A549 (cell line): ENCODE measurements at regions of chr16 and their contacts with region 1.

Region 1: DNA sequence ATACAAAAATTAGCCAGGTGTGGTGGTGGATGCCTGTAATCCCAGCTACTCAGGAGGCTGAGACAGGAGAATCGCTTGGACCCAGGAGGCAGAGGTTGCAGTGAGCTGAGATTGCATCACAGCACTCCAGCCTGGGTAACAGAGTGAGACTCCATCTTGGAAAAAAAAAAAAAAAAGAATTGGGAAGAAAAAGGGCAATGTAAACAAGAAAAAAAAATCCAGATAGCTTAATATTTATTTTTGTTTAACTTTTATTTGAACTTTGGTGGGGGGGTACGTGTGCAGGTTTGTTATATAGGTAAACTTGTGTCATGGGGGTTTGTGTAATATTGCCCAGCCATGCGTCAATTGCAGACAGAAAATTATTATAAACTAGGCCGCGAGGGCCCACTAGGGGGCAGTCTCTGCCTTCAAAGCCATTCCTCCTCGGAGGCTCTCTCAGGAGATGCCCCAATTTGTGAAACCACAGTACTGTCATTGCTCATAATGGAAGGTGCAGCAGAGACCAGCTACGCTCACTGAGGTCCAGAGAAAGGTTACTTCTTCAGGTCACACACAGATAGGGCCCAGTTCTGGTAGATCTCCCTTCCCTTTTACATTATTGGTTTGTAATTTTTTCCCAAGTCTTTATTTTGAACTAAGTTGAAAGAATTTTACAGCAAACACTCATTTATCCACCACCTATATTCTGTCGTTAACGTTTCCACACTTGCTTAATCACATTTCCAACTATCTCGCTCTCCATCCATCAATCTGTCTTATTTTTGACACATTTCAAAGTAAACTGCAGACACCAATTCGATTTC is 206.2 kb downstream of the PRKCB start:
- DNase-seq: peak; percentile 65 to 69
- ATAC-seq: peak; percentile 76 to 89; a peak in 5 of 6 replicates
- H3K4me3 ChIP-seq: no peak overlapping the region
- H3K27ac ChIP-seq: no peak overlapping the region
- H3K4me1 ChIP-seq: no peaks in the 10 kb centered on the region
- CTCF ChIP-seq: peak; percentile 79
- EP300 ChIP-seq: no peak
- POLR2A ChIP-seq: no peak
- RAD21 ChIP-seq: peak; percentile 78 to 89

Region 2: GRCh38 chr16:23823475-23824384 is 218.3 kb before region 1 on chr16:
- CTCF ChIA-PET with region 1: no interaction called
- POLR2A ChIA-PET with region 1: no interaction called
- DNase-seq: no peak
- ATAC-seq: peak in 1 of 2 experiments; percentile 47; a peak in 1 of 6 replicates
- H3K4me3 ChIP-seq: no peak overlapping the region
- H3K27ac ChIP-seq: no peak overlapping the region
- H3K4me1 ChIP-seq: no peaks in the 10 kb centered on the region
- CTCF ChIP-seq: no peak
- EP300 ChIP-seq: no peak
- POLR2A ChIP-seq: no peak
- RAD21 ChIP-seq: no peak

Region 3: GRCh38 chr16:23941963-23942564 is 100.0 kb before region 1 on chr16:
- CTCF ChIA-PET with region 1: no interaction called
- POLR2A ChIA-PET with region 1: no interaction called
- DNase-seq: no peak
- ATAC-seq: no peak
- H3K4me3 ChIP-seq: no peak overlapping the region
- H3K27ac ChIP-seq: no peak overlapping the region
- H3K4me1 ChIP-seq: no peaks in the 10 kb centered on the region
- CTCF ChIP-seq: no peak
- EP300 ChIP-seq: no peak
- POLR2A ChIP-seq: no peak
- RAD21 ChIP-seq: no peak

Region 4: DNA sequence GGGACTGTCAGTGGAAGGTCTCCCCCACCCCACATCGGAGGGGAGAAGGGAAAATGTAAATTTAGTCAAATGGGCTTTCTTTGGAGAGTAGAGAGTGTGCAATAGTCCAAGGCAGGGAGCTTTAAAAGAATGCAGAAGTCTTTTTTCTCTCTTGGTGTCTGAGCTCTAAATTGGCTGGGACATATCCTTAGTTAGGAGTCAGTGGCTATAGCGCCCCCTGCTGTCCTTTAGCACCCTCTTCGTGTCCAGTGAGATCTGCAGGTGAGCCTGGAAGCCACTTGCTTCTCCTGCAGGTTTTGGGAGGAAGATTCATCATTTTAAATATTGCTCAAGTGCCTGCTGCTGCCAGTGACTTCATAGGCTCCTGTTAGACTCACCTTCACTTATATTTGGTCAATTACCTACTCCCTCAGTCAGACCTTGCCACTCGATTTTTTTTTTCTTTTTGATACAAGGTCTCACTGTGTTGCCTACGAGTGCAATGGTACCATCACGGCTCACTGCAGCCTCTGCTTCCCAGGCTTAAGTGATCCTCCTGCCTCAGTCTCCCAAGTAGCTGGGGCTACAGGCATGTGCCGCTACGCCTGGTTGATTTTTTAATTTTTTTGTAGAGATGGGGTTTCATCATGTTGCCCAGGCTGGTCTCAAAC is 31.5 kb before region 1 on chr16:
- CTCF ChIA-PET with region 1: interaction called, 23 read pairs
- POLR2A ChIA-PET with region 1: no interaction called
- DNase-seq: peak; percentile 48 to 81
- ATAC-seq: peak; percentile 82 to 95
- H3K4me3 ChIP-seq: no peak overlapping the region
- H3K27ac ChIP-seq: no peak overlapping the region
- H3K4me1 ChIP-seq: no peaks in the 10 kb centered on the region
- CTCF ChIP-seq: peak; percentile 68
- EP300 ChIP-seq: no peak
- POLR2A ChIP-seq: no peak
- RAD21 ChIP-seq: peak; percentile 64 to 80; a peak in 4 of 5 replicates

Region 5: DNA sequence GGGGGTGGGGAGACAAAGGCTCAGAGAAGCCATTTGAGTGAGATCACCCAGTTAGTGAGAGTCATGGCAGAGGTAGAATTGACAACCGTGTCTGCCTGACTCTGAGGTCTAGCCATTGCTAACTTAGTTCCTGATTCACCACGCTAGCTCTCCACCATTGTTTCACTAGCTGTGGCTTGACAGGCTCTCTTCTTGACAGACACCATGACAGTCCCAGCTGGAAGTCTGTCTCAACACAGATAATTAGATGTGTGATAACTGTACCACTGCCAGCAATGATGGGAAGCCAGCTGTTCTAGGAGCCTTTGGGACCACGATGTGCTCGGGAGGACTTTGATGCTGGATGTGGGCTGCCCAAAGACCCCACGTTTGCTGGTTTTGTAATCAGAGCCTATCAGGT is 43.6 kb after region 1 on chr16:
- CTCF ChIA-PET with region 1: no interaction called
- POLR2A ChIA-PET with region 1: no interaction called
- DNase-seq: no peak
- ATAC-seq: no peak
- H3K4me3 ChIP-seq: no peak overlapping the region
- H3K27ac ChIP-seq: no peak overlapping the region
- H3K4me1 ChIP-seq: no peaks in the 10 kb centered on the region
- CTCF ChIP-seq: no peak
- EP300 ChIP-seq: no peak
- POLR2A ChIP-seq: no peak
- RAD21 ChIP-seq: no peak

Region 6: GRCh38 chr16:24253192-24253591 is 211.2 kb after region 1 on chr16:
- CTCF ChIA-PET with region 1: interaction called, 19 read pairs
- POLR2A ChIA-PET with region 1: no interaction called
- DNase-seq: peak; percentile 45 to 65
- ATAC-seq: peak; percentile 80 to 92; a peak in 5 of 6 replicates
- H3K4me3 ChIP-seq: no peak overlapping the region
- H3K27ac ChIP-seq: no peak overlapping the region
- H3K4me1 ChIP-seq: no peaks in the 10 kb centered on the region
- CTCF ChIP-seq: peak; percentile 61
- EP300 ChIP-seq: no peak
- POLR2A ChIP-seq: no peak
- RAD21 ChIP-seq: peak; percentile 24 to 43; a peak in 2 of 5 replicates

Region 7: GRCh38 chr16:24499193-24499814 is 457.3 kb after region 1 on chr16:
- CTCF ChIA-PET with region 1: interaction called, 279 read pairs
- POLR2A ChIA-PET with region 1: no interaction called
- DNase-seq: peak; percentile 50 to 57
- ATAC-seq: peak; percentile 91 to 92
- H3K4me3 ChIP-seq: no peak overlapping the region
- H3K27ac ChIP-seq: no peak overlapping the region
- H3K4me1 ChIP-seq: no peaks in the 10 kb centered on the region
- CTCF ChIP-seq: peak; percentile 49
- EP300 ChIP-seq: no peak
- POLR2A ChIP-seq: no peak
- RAD21 ChIP-seq: peak; percentile 70 to 86